ENCODE measurements at regions of chr7 and their contacts with region 1.

Region 1: GRCh38 chr7:44581879-44582603 is at the start of gene TMED4:
- DNase-seq: peak; percentile 100
- ATAC-seq: peak; percentile 97
- H3K4me3 Mint-ChIP-seq: peak within 1 kb of the TSS; percentile 92
- H3K27ac Mint-ChIP-seq: peak within 1 kb of the TSS; percentile 98
- H3K4me1 Mint-ChIP-seq: peaks cover 13% of the 10 kb centered on the region
- H3K27me3 Mint-ChIP-seq: no peaks in the 10 kb centered on the region
- CTCF ChIP-seq: no peak
- total RNA-seq, gene TMED4: 58.6 to 61.9 TPM (median 60.9 TPM) in 3 replicates

Region 2: GRCh38 chr7:44695381-44696155 is 113.5 kb after region 1 on chr7:
- CTCF ChIA-PET with region 1: no interaction called
- POLR2A ChIA-PET with region 1: interaction called, 11 read pairs
- DNase-seq: no peak
- ATAC-seq: no peak
- H3K4me3 Mint-ChIP-seq: no peak overlapping the region
- H3K27ac Mint-ChIP-seq: no peak overlapping the region
- H3K4me1 Mint-ChIP-seq: no peaks in the 10 kb centered on the region
- H3K27me3 Mint-ChIP-seq: no peaks in the 10 kb centered on the region
- CTCF ChIP-seq: no peak